Aorta (tissue), 5 donors: ENCODE measurements at regions of chr1 and their contacts with region 1.

Region 1: GRCh38 chr1:8026153-8026975 is at the start of gene ERRFI1:
- DNase-seq: peak; percentile 96 to 98
- ATAC-seq: peak; percentile 95
- H3K4me3 ChIP-seq: peak within 1 kb of the TSS; percentile 77 to 98
- H3K27ac ChIP-seq: peak within 1 kb of the TSS; percentile 90 to 91
- H3K4me1 ChIP-seq: peaks cover 2 to 5% of the 10 kb centered on the region in 2 donors
- H3K27me3 ChIP-seq: no peaks in the 10 kb centered on the region
- total RNA-seq, gene ERRFI1: 153 to 258 TPM

Region 2: GRCh38 chr1:7805460-7805859 is 220.9 kb before region 1 on chr1:
- intact Hi-C with region 1: no loop called
- DNase-seq: no peak
- ATAC-seq: no peak
- H3K4me3 ChIP-seq: no peak overlapping the region
- H3K27ac ChIP-seq: no peak overlapping the region
- H3K4me1 ChIP-seq: no peaks in the 10 kb centered on the region
- H3K27me3 ChIP-seq: no peaks in the 10 kb centered on the region

Region 3: DNA sequence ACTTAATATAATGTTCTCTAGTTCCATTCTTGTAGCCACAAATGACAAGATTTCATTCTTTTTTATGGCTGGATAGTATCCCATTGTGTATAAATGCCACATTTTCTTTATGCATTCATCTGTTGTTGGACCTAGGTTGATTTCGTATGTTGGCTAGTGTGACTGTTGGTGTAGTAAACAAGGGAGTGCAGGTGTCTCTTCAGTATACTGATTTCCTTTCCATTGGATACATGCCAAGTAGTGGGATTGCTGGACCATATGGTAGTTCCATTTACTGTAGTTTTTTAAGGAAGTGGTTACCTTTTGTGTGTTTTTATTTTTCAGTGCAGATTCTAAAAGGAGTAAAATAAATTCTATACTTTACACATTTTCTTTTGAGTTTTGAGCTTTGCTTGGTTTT is 59.2 kb before region 1 on chr1:
- intact Hi-C with region 1: no loop called
- DNase-seq: no peak
- ATAC-seq: no peak
- H3K4me3 ChIP-seq: no peak overlapping the region
- H3K27ac ChIP-seq: no peak overlapping the region
- H3K4me1 ChIP-seq: peaks cover 0 to 3% of the 10 kb centered on the region in 2 donors
- H3K27me3 ChIP-seq: no peaks in the 10 kb centered on the region

Region 4: GRCh38 chr1:8121261-8122170 is 95.2 kb after region 1 on chr1:
- intact Hi-C with region 1: loop called (anchors 5 kb)
- DNase-seq: peak; percentile 76 to 77
- ATAC-seq: peak; percentile 87
- H3K4me3 ChIP-seq: no peak overlapping the region
- H3K27ac ChIP-seq: peak overlapping the region; percentile 88 to 99
- H3K4me1 ChIP-seq: peaks cover 8 to 21% of the 10 kb centered on the region in 2 donors
- H3K27me3 ChIP-seq: no peaks in the 10 kb centered on the region